ENCODE measurements at regions of chr11 and their contacts with region 1.

Region 1: GRCh38 chr11:69888483-69889076 is 69.4 kb upstream of the FGF3 start:
- H3K4me3 Mint-ChIP-seq: no peak overlapping the region
- H3K27ac Mint-ChIP-seq: no peak overlapping the region
- H3K4me1 Mint-ChIP-seq: no peaks in the 10 kb centered on the region
- H3K27me3 Mint-ChIP-seq: peaks cover 34% of the 10 kb centered on the region

Region 2: DNA sequence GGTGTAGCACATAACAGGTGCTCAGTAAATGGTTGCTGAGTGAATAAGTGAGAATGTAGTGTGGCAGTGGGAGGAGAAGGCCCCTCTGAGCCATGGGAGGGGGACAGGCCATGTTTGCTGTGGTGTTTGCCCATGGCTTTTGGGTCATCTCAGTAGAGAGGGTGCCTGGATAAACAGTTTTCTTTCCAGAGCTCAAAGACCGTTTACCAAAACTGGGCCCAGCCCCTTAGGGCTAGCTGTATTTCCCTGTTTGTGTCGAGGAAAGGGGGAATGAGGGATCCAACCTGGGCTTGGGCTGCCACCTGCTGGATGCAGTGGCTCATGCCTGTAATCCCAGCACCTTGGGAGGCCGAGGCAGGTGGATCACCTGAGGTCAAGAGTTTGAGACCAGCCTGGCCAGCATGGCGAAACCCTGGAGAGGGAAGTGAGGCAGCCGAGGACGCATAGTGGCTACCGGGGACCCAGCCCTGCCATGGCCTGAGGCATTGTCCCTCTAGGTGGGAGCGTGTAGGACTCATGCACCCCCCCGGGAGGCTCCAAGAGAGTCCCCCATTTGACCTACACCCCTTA is 204.7 kb before region 1 on chr11:
- intact Hi-C with region 1: loop called (anchors 1 kb)
- H3K4me3 Mint-ChIP-seq: no peak overlapping the region
- H3K27ac Mint-ChIP-seq: no peak overlapping the region
- H3K4me1 Mint-ChIP-seq: peaks cover 9% of the 10 kb centered on the region
- H3K27me3 Mint-ChIP-seq: peaks cover 39% of the 10 kb centered on the region